ENCODE measurements at regions of chr1 and their contacts with region 1.

Region 1: DNA sequence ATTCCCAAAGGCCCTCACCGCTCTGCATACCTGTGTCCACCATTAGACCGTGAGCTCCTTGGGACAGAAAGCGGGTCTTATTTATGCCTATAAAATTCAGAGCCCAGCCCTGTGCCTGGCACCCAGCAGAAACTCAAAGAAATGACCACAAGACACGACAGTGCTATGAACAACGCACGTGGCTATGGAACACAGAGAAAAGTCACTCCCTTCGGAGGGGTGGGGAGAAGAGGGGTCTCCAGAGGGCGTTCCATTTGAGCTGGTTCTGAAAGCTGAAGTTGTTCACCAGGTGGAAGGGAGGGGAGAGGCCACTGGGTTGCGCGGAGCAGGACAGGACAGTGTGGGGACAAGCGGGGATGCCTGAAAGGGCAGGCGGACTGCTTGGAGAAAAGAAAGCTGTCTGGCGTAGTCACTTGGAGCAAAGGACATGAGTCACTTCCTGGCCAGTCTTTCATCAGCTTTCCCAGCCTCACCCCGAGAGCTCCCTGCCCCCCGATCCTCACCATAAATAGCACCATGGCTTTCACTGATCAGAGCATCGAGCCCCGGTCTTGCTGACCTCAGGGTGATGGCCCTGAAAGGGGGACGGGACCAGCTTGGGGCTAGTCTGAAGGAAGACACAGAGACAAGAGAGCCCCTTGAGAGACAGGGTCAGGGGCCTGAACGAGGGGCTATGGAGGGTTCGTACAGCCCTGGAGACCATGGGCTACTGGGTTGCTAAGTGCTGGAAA is 28.5 kb downstream of the ECE1 start:
- DNase-seq: no peak
- ATAC-seq: peak; percentile 79
- H3K4me3 ChIP-seq: peak overlapping the region; percentile 17
- H3K27ac ChIP-seq: peak overlapping the region; percentile 73
- H3K4me1 ChIP-seq: peaks cover 38% of the 10 kb centered on the region
- H3K27me3 ChIP-seq: no peaks in the 10 kb centered on the region
- CTCF ChIP-seq: no peak

Region 2: GRCh38 chr1:21334214-21335087 is 72.7 kb after region 1 on chr1:
- intact Hi-C with region 1: loop called (anchors 10 kb)
- DNase-seq: peak; percentile 84
- ATAC-seq: peak; percentile 78
- H3K4me3 ChIP-seq: peak overlapping the region; percentile 37
- H3K27ac ChIP-seq: peak overlapping the region; percentile 78
- H3K4me1 ChIP-seq: peaks cover 79% of the 10 kb centered on the region
- H3K27me3 ChIP-seq: no peaks in the 10 kb centered on the region
- CTCF ChIP-seq: peak; percentile 67